ENCODE measurements at regions of chr1 and their contacts with region 1.

Region 1: DNA sequence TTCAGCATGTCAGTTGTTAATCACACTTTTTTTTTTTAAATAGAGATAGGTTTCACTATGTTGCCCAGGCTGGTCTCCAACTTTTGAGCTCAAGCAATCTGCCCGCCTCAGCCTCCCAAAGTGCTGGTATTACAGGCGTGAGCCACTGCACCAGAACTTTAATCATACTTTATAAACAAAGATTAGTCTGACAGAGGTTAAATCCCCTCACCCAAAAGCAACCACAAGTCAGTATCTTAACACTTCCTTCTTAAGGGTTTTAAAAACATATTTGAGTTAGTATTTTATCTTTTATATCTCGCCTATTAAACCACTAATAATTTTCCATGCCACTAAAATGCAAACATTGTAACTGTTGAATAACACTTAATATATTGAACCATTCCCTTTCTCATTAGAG is 70.2 kb downstream of the COP1 start:
- DNase-seq: no peak

Region 2: GRCh38 chr1:175900171-175900570 is 236.7 kb before region 1 on chr1:
- intact Hi-C with region 1: no loop called
- DNase-seq: no peak

Region 3: GRCh38 chr1:177959811-177960515 is 1823.1 kb after region 1 on chr1:
- intact Hi-C with region 1: loop called in 1 of 2 experiments (anchors 10 kb)
- DNase-seq: no peak

Measured in posterior vena cava (tissue), 2 donors.